Activated CD4-positive, alpha-beta memory T cell treated with anti-CD3 and anti-CD28 coated beads for 36 hours (primary cell): ENCODE measurements at regions of chr3 and their contacts with region 1.

Region 1: GRCh38 chr3:44338010-44338827 is at the start of gene TCAIM:
- DNase-seq: peak; percentile 99
- H3K4me3 Mint-ChIP-seq: peak within 1 kb of the TSS; percentile 98
- H3K27ac Mint-ChIP-seq: peak within 1 kb of the TSS; percentile 97
- H3K4me1 Mint-ChIP-seq: peaks cover 22% of the 10 kb centered on the region
- H3K27me3 Mint-ChIP-seq: peaks cover 6% of the 10 kb centered on the region
- total RNA-seq, gene TCAIM: 17.2 to 17.9 TPM

Region 2: DNA sequence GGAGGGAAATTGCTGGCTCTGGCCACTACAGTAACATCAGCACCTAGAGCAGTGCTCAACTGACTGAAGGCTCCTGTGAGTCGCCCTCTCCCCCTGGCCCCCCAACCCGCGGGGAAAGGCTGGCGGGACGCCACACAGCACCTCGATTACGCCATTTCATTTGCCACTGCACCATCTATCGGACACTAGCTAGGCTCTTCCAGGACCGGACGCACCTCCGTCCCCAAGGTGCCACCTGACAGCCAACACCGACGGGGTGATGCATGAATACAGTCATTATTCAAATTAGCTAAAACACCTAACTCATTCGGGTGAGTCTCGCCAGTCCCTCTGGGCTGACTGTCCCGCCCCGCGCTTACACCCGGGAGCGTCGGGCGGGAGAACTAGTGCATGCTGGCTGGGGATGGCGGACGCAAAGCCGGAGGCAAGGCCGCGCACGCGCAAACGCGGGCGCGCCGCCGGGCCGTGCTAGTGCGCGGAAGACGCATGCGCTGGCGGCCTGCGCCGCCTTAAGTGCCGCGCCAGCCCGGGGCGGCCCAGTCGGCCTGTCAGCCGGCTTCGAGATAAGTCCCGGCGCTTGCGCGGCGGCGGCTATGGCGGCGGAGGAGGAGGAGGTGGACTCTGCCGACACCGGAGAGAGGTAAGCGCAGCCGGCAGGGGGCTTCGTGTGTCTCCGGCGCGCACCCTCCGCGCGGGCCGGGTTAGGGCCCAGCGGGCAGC is 647.7 kb before region 1 on chr3 and contains the start of gene ABHD5:
- CTCF ChIA-PET with region 1: no interaction called
- POLR2A ChIA-PET with region 1: no interaction called
- intact Hi-C with region 1: loop called (anchors 5 kb)
- DNase-seq: peak; percentile 92
- H3K4me3 Mint-ChIP-seq: peak within 1 kb of the TSS; percentile 84
- H3K27ac Mint-ChIP-seq: peak within 1 kb of the TSS; percentile 85
- H3K4me1 Mint-ChIP-seq: peaks cover 37% of the 10 kb centered on the region
- H3K27me3 Mint-ChIP-seq: no peaks in the 10 kb centered on the region
- total RNA-seq, gene ABHD5: 10.0 to 11.4 TPM

Region 3: DNA sequence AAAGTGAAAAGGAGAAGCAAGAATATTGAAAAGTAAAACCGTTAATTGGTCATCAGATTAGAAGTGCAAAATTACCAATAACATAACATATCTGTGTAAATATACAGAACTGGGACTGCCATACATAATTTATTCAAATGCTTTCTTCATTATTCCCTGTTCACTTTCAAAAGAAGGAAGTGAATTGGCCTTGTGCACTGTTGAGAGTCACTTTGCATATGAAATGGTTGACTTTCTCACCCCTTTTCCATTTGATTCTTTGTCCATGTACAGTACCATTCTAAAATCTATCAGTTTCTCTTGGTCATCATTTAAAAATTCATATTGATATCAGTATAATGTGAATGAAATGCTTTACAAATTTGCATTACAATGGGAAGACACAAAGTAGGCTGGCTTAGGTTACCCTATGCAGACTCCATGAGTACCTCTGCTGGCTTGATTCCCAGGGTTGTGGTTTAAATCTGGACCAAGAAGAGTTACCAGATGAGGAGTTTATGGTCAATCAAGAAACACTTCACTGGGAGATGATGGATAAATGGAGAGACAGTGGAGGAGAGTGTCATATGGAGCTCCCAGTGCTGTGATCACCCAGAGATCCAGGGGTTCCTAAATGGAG is 307.4 kb before region 1 on chr3:
- CTCF ChIA-PET with region 1: no interaction called
- POLR2A ChIA-PET with region 1: no interaction called
- intact Hi-C with region 1: no loop called
- DNase-seq: no peak
- H3K4me3 Mint-ChIP-seq: no peak overlapping the region
- H3K27ac Mint-ChIP-seq: no peak overlapping the region
- H3K4me1 Mint-ChIP-seq: no peaks in the 10 kb centered on the region
- H3K27me3 Mint-ChIP-seq: peaks cover 8% of the 10 kb centered on the region

Region 4: GRCh38 chr3:44184319-44184953 is 153.8 kb before region 1 on chr3:
- CTCF ChIA-PET with region 1: no interaction called
- POLR2A ChIA-PET with region 1: no interaction called
- intact Hi-C with region 1: no loop called
- DNase-seq: no peak
- H3K4me3 Mint-ChIP-seq: no peak overlapping the region
- H3K27ac Mint-ChIP-seq: no peak overlapping the region
- H3K4me1 Mint-ChIP-seq: no peaks in the 10 kb centered on the region
- H3K27me3 Mint-ChIP-seq: peaks cover 14% of the 10 kb centered on the region

Region 5: DNA sequence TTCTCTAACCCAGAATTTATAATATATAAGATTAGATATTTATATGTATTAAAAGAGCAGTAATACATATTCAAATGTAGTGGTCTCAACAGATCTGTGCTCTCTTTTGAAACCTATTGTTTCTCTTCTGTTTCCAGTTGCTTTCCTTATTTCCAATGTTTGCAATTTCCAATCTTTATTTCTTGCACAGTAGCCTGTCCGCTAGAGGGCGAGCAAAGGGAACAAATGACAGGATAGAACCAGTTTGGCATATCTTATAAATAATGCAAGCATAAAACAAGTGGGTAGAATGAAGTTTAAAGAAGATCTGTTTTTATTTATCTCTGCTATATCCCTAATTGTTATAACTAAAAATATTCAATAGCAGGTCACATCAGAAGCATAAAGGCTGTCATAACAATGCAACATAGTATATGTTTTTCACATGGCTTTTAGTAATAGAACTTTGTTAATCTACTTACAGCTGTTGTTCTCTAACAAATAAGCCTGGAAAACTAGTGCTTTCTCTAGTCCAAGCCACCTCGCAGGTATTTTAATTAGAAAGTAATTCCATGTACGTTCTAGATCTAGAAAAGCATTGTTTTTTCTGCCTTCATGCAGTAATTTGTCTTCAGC is 14.8 kb before region 1 on chr3:
- CTCF ChIA-PET with region 1: interaction called, 10 read pairs
- POLR2A ChIA-PET with region 1: no interaction called
- intact Hi-C with region 1: no loop called
- DNase-seq: peak; percentile 65
- H3K4me3 Mint-ChIP-seq: no peak overlapping the region
- H3K27ac Mint-ChIP-seq: no peak overlapping the region
- H3K4me1 Mint-ChIP-seq: no peaks in the 10 kb centered on the region
- H3K27me3 Mint-ChIP-seq: peaks cover 6% of the 10 kb centered on the region

Region 6: GRCh38 chr3:44439499-44440295 is 101.5 kb after region 1 on chr3:
- CTCF ChIA-PET with region 1: interaction called, 4 read pairs
- POLR2A ChIA-PET with region 1: interaction called, 5 read pairs
- intact Hi-C with region 1: loop called (anchors 2 kb)
- DNase-seq: peak; percentile 91
- H3K4me3 Mint-ChIP-seq: peak overlapping the region; percentile 25
- H3K27ac Mint-ChIP-seq: peak overlapping the region; percentile 90
- H3K4me1 Mint-ChIP-seq: peaks cover 47% of the 10 kb centered on the region
- H3K27me3 Mint-ChIP-seq: no peaks in the 10 kb centered on the region

Region 7: DNA sequence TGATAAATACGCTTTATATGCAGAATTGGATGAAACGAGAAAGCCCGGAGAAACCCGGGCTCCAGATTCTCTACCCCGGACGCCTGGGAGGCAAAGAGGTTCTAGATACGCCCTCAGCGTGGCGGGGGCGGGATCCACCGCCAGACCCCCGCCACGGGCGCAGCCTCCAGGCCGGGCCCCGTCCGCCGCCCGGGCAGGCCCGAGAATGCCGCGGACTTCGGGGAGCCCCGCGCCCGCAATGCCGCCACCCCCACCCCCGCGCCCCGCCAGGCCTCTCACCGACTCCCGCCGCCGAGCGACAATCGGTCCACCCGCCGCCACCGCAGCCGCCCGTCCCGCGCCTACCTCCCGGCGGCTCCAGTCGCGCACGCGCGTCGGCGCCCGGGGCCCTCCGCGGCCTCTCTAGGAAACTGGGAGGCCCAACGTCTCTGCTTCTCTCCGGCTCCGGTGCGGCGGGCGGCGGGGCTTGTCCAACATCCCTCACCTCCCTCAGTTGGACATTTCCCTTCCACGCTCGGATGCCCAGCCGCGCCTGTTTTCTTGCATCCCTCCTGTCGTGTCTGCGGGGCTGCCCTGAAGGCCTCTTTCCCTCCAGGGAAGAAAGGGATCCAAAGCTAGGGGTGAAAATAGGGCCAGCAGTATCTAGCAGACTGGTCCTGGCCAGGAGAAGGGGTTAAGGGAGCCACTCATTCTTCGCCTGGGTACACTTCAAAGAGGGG is 139.3 kb after region 1 on chr3 and contains the start of gene ZNF445:
- CTCF ChIA-PET with region 1: no interaction called
- POLR2A ChIA-PET with region 1: interaction called, 6 read pairs
- intact Hi-C with region 1: loop called (anchors 1 kb)
- DNase-seq: peak; percentile 83
- H3K4me3 Mint-ChIP-seq: peak within 1 kb of the TSS; percentile 85
- H3K27ac Mint-ChIP-seq: peak within 1 kb of the TSS; percentile 74
- H3K4me1 Mint-ChIP-seq: peaks cover 25% of the 10 kb centered on the region
- H3K27me3 Mint-ChIP-seq: no peaks in the 10 kb centered on the region
- total RNA-seq, gene ZNF445: 16.6 to 18.7 TPM

Region 8: GRCh38 chr3:44624749-44625480 is 286.7 kb after region 1 on chr3 and contains the start of gene ZNF197:
- CTCF ChIA-PET with region 1: no interaction called
- POLR2A ChIA-PET with region 1: no interaction called
- intact Hi-C with region 1: loop called (anchors 10 kb)
- DNase-seq: peak; percentile 78
- H3K4me3 Mint-ChIP-seq: peak within 1 kb of the TSS; percentile 80
- H3K27ac Mint-ChIP-seq: peak within 1 kb of the TSS; percentile 47
- H3K4me1 Mint-ChIP-seq: peaks cover 20% of the 10 kb centered on the region
- H3K27me3 Mint-ChIP-seq: no peaks in the 10 kb centered on the region
- total RNA-seq, gene ZNF197: 9.1 to 9.9 TPM